ENCODE measurements at regions of chr5 and their contacts with region 1.

Region 1: GRCh38 chr5:671459-672328 is 21.5 kb downstream of the TPPP start:
- DNase-seq: peak; percentile 86
- ATAC-seq: peak; percentile 69

Region 2: GRCh38 chr5:633501-633955 is 38.2 kb before region 1 on chr5:
- intact Hi-C with region 1: no loop called
- DNase-seq: no peak
- ATAC-seq: no peak

Region 3: GRCh38 chr5:905139-905642 is 233.5 kb after region 1 on chr5:
- intact Hi-C with region 1: loop called (anchors 2 kb)
- DNase-seq: no peak
- ATAC-seq: no peak